PC-9 (cell line): ENCODE measurements at regions of chr17 and their contacts with region 1.

Region 1: DNA sequence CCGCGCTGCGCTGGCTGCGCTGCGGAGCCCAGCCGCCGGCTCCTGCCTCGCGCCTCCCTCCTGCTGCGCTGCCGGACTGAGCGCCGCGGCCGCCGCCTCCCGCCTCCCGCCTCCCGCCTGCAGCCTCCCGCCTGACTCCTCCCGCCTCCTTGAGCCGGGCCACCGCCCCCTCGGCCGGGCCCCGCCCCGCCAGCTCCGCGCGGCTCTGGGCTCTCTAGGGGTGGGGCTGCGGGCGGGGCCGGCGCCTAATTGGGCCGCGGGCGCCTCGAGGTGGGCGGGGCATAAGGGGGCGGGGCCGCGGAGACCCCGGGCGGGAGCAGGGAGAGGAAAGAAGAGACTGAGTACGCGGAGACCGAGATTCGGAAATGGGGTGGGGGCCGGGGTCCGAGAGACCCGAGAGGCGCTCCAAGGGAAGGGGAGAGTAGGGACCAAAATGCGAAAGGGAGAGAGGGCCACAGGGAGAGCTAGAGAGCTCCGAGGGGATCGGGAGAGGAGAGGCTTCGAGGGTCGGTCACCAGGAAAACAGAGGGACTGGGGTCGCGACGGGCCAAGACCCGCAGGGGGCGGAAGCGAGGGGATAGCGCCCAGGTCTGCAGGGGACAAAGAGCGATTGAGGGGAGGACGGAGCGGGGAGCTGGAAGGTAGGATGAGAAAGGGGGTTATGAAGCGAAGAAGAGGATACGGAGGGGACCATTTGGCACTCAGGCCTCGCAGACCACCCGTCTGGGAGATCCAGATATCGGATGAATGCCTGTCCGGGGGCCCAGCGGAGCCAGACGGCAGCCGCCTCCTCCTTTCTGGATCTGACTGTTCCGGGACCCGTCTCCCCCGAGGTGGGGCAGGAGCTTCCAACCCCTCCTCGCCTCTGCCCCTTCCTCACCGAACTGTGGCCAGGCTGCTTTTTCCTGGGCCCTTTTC is at the start of gene C1QL1:
- DNase-seq: peak; percentile 63 to 89
- H3K4me3 ChIP-seq: peak within 1 kb of the TSS; percentile 47
- H3K27ac ChIP-seq: no peak within 1 kb of the TSS
- H3K4me1 ChIP-seq: no peaks in the 10 kb centered on the region
- H3K27me3 ChIP-seq: peaks cover 17% of the 10 kb centered on the region; the same call in 1 of the 2 replicates
- CTCF ChIP-seq: no peak
- total RNA-seq, gene C1QL1: 0.93 and 1.3 TPM in 2 replicates

Region 2: DNA sequence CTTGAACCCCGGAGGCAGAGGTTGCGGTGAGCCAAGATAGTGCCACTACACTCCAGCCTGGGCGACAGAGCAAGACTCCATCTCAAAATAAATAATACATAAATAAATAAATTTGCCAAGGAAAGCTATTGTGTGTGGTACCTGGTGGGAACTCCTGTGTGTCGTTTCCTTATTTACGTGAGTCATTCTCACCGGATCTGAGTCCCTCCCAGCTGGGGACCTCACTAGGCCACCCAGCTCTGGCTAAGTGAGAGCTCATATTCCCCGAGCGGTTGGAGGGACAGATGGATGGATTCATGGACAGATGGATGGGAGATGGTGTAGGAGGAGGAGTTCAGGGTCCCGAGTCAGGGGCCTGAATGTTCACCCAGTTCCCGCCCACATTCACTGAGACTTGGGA is 22.5 kb after region 1 on chr17:
- CTCF ChIA-PET with region 1: no interaction called
- POLR2A ChIA-PET with region 1: interaction called, 14 read pairs
- intact Hi-C with region 1: no loop called
- DNase-seq: peak in 1 of 2 experiments; percentile 37
- H3K4me3 ChIP-seq: no peak overlapping the region
- H3K27ac ChIP-seq: no peak overlapping the region
- H3K4me1 ChIP-seq: peaks cover 8% of the 10 kb centered on the region; the same call in 1 of the 2 replicates
- H3K27me3 ChIP-seq: peaks cover 10% of the 10 kb centered on the region; the same call in 1 of the 2 replicates
- CTCF ChIP-seq: no peak

Region 3: GRCh38 chr17:45051060-45051719 is 82.7 kb after region 1 on chr17 and contains the start of gene DCAKD:
- CTCF ChIA-PET with region 1: no interaction called
- POLR2A ChIA-PET with region 1: no interaction called
- intact Hi-C with region 1: no loop called
- DNase-seq: peak; percentile 88 to 95
- H3K4me3 ChIP-seq: peak within 1 kb of the TSS; percentile 98
- H3K27ac ChIP-seq: peak within 1 kb of the TSS; percentile 92
- H3K4me1 ChIP-seq: peaks cover 26% of the 10 kb centered on the region
- H3K27me3 ChIP-seq: no peaks in the 10 kb centered on the region
- CTCF ChIP-seq: no peak
- total RNA-seq, gene DCAKD: 57.9 and 68.8 TPM in 2 replicates

Region 4: DNA sequence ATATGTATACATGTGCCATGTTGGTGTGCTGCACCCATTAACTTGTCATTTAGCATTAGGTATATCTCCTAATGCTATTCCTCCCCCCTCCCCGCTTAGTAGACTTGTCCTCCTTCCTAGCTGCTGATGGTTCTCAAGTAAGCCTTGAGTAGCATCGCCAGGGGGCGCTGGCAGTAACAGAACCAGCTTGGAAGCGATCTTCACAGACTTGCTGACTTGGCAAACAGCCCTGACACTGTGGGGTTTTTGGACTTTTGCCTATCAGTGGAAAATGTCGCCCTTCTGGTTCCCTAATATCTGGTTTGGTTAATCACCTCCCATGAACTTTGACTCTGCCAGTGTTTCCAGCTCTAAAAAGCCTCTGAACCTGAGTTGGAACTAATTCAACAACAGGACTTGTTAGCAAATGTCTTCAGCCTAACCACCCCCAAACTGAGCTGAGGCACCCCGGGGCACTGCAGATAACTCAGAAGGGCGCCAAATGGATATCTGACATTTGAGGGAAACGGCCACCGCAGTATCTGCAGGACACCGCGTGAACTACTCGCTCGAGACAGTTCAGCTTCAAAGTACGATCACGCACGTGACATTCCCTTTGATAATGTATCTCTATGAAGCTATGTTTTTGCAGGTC is 308.8 kb after region 1 on chr17:
- CTCF ChIA-PET with region 1: no interaction called
- POLR2A ChIA-PET with region 1: no interaction called
- intact Hi-C with region 1: no loop called
- DNase-seq: peak; percentile 88 to 89
- H3K4me3 ChIP-seq: no peak overlapping the region
- H3K27ac ChIP-seq: peak overlapping the region; percentile 17
- H3K4me1 ChIP-seq: peaks cover 18% of the 10 kb centered on the region
- H3K27me3 ChIP-seq: no peaks in the 10 kb centered on the region
- CTCF ChIP-seq: peak; percentile 95

Region 5: DNA sequence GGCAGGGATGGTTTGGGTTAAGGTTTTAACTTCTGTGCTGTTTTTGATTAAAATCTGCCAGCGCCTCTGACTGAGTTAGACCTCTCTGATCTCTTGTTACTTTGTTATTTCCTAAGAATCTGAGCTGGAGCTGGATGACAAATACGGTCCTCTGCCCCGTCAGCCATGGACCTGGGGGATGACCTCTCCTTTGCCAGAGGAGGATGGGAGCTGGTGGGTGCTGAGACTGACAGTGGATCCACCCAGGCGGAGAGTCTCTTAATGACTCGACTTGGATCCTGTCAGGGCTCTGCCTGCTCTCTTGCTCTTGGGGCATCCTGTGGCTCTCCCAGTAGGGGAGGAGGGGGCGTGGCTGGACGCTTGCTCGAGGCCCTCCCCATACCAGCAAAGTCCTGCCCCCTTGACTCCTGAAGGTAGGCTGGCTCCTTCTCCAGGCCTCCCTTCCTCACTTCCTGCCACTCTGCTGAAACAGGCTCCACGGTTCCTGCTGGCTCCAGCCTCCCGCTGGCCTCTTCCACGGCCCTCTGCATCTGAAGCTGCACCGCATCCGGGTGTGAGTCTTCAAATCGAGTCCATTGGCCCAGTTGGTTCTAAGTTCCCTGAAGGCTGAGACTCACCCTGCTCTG is 373.2 kb after region 1 on chr17:
- CTCF ChIA-PET with region 1: no interaction called
- POLR2A ChIA-PET with region 1: interaction called, 14 read pairs
- intact Hi-C with region 1: no loop called
- DNase-seq: peak; percentile 80 to 88
- H3K4me3 ChIP-seq: peak overlapping the region; percentile 35; the same call in 1 of the 2 replicates
- H3K27ac ChIP-seq: no peak overlapping the region
- H3K4me1 ChIP-seq: peaks cover 18% of the 10 kb centered on the region
- H3K27me3 ChIP-seq: no peaks in the 10 kb centered on the region
- CTCF ChIP-seq: no peak